ENCODE measurements at regions of chr19 and their contacts with region 1.

Region 1: DNA sequence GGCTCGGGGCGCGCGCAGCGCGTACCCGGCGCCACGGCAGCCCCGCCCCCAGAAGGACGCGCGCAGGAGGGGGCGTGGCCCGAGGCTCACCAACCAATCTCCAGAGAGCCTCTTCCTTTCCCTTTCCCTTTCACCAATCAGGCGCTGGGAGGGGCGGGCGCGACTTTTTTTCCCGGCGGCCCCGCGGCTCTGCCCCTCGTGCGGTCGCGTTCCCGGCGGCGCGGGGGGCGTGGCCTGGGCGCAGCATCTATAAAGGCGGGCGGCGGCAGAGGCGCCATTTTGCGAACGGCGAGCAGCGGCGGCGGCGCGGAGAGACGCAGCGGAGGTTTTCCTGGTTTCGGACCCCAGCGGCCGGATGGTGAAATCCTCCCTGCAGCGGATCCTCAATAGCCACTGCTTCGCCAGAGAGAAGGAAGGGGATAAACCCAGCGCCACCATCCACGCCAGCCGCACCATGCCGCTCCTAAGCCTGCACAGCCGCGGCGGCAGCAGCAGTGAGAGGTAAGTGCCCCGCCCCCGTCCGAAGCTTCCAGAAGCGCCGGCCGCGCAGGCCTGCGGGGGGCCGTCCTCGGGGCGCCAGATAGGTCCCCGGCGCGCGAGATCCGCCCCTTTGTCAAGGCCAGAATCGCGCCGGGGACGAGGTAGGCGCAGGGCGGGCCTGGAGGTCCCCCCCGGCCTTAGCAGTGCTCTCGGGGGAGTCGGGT is 12.6 kb downstream of the PEAK3 start:
- DNase-seq: peak; percentile 99

Region 2: GRCh38 chr19:2050991-2051772 is 218.2 kb before region 1 on chr19 and contains the start of gene MKNK2:
- intact Hi-C with region 1: no loop called
- DNase-seq: peak; percentile 98
- total RNA-seq, gene MKNK2: 122 TPM

Region 3: DNA sequence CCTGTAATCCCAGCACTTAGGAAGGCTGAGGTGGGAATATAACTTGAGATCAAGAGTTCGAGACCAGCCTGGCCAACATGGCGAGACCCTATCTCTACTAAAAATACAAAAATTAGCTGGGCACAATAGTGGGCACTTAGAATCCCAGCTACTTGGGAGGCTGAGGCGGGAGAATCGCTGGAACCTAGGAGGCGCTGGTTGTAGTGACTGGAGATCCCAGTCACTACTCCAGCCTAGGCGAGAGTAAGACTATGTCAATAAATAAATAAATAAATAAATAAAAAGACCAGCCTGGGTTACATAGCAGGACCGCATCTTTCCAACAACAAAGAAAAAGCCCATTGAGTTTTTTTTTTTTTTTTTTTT is 107.7 kb before region 1 on chr19:
- intact Hi-C with region 1: loop called (anchors 2 kb)
- DNase-seq: no peak

Region 4: GRCh38 chr19:2236314-2237050 is 32.9 kb before region 1 on chr19 and contains the starts of genes PLEKHJ1 and SF3A2:
- intact Hi-C with region 1: loop called (anchors 1 kb)
- DNase-seq: peak; percentile 98
- total RNA-seq, gene PLEKHJ1: 51.2 TPM
- total RNA-seq, gene SF3A2: 34.1 TPM

Region 5: GRCh38 chr19:2315818-2316353 is 46.5 kb after region 1 on chr19:
- intact Hi-C with region 1: loop called (anchors 2 kb)
- DNase-seq: peak; percentile 93

Region 6: GRCh38 chr19:2610637-2611482 is 341.5 kb after region 1 on chr19:
- intact Hi-C with region 1: loop called (anchors 10 kb)
- DNase-seq: peak; percentile 97